ENCODE measurements at regions of chr21 and their contacts with region 1.

Region 1: GRCh38 chr21:46458315-46459023 is at the start of gene DIP2A:
- DNase-seq: peak; percentile 98
- H3K4me3 ChIP-seq: peak within 1 kb of the TSS; percentile 58 to 85 (median 74)
- H3K27ac ChIP-seq: peak within 1 kb of the TSS; percentile 45
- H3K4me1 ChIP-seq: peaks cover 35% of the 10 kb centered on the region
- H3K27me3 ChIP-seq: no peaks in the 10 kb centered on the region
- CTCF ChIP-seq: no peak
- POLR2A ChIP-seq: peak; percentile 82
- total RNA-seq, gene DIP2A: 57.6 and 62.1 TPM in 2 replicates

Region 2: DNA sequence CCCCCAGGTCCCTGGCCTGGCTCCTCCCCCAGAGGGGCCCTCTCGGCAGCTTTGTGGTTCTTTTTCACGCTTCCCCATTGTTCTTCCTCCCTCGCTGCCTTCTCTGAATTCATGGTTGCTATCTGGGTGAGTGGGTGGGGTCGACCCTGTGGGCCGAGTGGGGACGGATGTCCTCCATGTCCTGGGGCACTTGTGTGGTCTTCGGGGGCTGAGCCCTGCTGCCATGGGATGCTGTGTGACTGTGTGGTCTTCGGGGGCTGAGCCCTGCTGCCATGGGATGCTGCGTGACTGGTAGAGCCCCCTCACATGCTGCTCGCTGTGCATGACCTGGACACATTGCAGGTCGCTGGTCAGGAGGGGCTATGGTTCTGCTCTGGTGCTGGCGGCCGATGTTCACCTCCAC is 21.4 kb before region 1 on chr21:
- CTCF ChIA-PET with region 1: no interaction called
- POLR2A ChIA-PET with region 1: no interaction called
- dilution Hi-C with region 1: no loop called
- intact Hi-C with region 1: no loop called
- DNase-seq: no peak
- H3K4me3 ChIP-seq: no peak overlapping the region
- H3K27ac ChIP-seq: no peak overlapping the region
- H3K4me1 ChIP-seq: no peaks in the 10 kb centered on the region
- H3K27me3 ChIP-seq: no peaks in the 10 kb centered on the region
- CTCF ChIP-seq: no peak
- POLR2A ChIP-seq: no peak

Region 3: DNA sequence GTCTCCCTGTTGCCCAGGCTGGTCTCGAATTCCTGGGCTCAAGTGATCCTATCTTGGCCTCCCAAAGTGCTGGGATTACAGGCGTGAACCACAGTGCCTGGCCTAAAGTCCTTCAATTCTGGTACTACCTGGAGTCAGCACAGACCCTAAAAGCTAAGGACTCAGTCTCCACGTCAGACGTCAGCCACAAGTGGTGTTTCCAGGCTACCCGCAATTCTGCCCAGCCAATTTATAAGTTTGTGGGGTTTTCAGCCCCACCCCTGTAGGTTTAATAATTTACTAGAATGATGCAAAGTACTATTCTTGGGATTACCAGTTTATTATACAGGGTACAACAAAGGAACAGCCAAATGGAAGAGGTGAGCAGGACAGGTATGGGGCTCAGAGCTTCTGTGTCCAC is 10.4 kb before region 1 on chr21:
- CTCF ChIA-PET with region 1: no interaction called
- POLR2A ChIA-PET with region 1: no interaction called
- dilution Hi-C with region 1: no loop called
- intact Hi-C with region 1: no loop called
- DNase-seq: no peak
- H3K4me3 ChIP-seq: no peak overlapping the region
- H3K27ac ChIP-seq: no peak overlapping the region
- H3K4me1 ChIP-seq: no peaks in the 10 kb centered on the region
- H3K27me3 ChIP-seq: no peaks in the 10 kb centered on the region
- CTCF ChIP-seq: no peak
- POLR2A ChIP-seq: no peak

Region 4: GRCh38 chr21:46469275-46469674 is 10.8 kb after region 1 on chr21:
- CTCF ChIA-PET with region 1: interaction called, 10 read pairs
- POLR2A ChIA-PET with region 1: no interaction called
- dilution Hi-C with region 1: no loop called
- intact Hi-C with region 1: no loop called
- DNase-seq: no peak
- H3K4me3 ChIP-seq: no peak overlapping the region
- H3K27ac ChIP-seq: no peak overlapping the region
- H3K4me1 ChIP-seq: peaks cover 8% of the 10 kb centered on the region
- H3K27me3 ChIP-seq: no peaks in the 10 kb centered on the region
- CTCF ChIP-seq: no peak
- POLR2A ChIP-seq: no peak

Region 5: GRCh38 chr21:46515109-46515508 is 56.6 kb after region 1 on chr21:
- CTCF ChIA-PET with region 1: interaction called, 3 read pairs
- POLR2A ChIA-PET with region 1: interaction called, 5 read pairs
- dilution Hi-C with region 1: no loop called
- intact Hi-C with region 1: loop called (anchors 5 kb)
- DNase-seq: peak; percentile 75
- H3K4me3 ChIP-seq: no peak overlapping the region
- H3K27ac ChIP-seq: peak overlapping the region; percentile 32
- H3K4me1 ChIP-seq: peaks cover 17% of the 10 kb centered on the region
- H3K27me3 ChIP-seq: no peaks in the 10 kb centered on the region
- CTCF ChIP-seq: no peak
- POLR2A ChIP-seq: no peak

Region 6: DNA sequence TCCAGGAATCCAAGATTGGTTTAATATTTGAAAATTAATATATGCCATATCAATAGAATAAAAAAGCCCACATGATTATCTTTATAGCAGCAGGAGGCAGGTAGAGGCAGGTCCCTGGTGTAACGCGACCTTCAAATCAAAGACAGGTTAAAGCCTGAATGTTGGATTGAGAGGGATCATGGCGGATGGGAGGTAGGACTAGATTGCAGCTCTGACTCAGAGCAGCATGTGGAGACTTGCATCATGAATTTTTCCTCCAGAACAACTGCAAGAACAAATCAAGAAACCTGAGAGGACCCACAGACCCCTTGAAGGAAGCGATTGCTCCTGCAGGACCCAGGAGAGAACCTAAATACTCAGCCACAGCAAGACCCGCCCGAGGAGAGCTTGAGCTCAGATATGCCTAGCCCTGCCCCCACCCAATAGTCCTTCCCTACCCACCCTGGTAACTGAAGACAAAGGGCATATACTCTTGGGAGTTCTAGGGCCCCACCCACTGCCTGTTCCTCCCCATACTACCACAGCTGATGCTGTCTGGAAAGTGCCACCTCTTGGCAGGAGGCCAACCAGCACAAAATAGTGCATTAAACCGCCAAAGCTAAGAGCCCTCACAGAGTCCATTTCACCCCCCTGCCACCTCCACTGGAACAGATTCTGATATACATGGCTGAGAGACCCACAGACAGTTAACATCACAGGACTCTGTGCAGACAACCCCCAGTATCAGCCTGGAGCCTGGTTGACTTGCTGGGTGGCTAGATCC is 126.9 kb after region 1 on chr21:
- CTCF ChIA-PET with region 1: no interaction called
- POLR2A ChIA-PET with region 1: no interaction called
- dilution Hi-C with region 1: no loop called
- intact Hi-C with region 1: no loop called
- DNase-seq: no peak
- H3K4me3 ChIP-seq: no peak overlapping the region
- H3K27ac ChIP-seq: no peak overlapping the region
- H3K4me1 ChIP-seq: no peaks in the 10 kb centered on the region
- H3K27me3 ChIP-seq: no peaks in the 10 kb centered on the region
- CTCF ChIP-seq: no peak
- POLR2A ChIP-seq: no peak

Measured in endothelial cell of umbilical vein (primary cell).